Thyroid gland (tissue), 4 donors: ENCODE measurements at regions of chr14 and their contacts with region 1.

Region 1: DNA sequence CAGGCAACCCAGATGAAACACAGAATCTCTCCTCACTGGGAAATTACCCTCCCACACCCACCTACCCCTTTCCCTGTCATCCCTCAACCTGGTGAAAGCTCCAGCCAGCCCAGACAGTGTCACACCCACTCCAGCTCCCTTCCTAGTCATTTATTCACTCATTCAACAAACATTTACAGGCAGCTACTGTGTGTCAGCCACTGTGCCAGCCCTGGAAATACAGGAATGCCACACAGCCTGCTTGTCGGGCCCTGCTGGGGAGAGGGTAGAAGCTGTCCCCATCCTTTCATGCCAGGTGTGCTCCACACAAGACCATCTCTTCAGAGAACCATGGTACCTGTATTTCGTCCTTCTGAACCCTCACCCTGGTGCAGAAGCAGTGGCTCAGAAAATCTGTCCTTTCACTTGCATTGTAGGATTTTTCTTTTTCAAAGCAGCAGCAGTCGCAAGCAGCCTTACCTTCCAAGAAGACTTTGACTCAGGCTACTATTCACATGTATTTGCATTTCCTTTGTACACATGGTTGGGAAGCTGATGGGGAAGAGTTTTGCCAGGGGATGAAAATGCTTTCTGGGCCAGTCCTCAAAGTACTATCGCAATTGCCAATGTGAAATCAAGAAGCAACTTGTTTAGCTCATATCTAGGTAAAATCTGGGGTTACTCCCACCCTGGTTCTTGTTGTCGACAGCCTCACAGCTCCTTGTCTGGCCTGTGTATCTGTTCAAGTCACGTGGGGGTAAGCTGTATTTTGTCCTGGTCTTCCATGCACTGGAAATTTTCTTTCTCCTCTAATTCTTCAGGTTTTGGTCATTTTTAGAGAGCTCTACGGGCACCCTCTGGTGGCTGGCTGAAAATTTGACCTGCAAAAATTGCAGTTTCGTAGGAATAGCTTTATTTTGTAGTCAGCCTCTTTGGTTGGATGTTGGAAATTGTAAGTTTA is 147.4 kb upstream of the EGLN3 start:
- DNase-seq: peak; percentile 36 to 59
- H3K4me3 ChIP-seq: no peak overlapping the region
- H3K27ac ChIP-seq: no peak overlapping the region
- H3K4me1 ChIP-seq: no peaks in the 10 kb centered on the region
- H3K27me3 ChIP-seq: no peaks in the 10 kb centered on the region
- CTCF ChIP-seq: peak; percentile 41 to 83 (median 64)
- POLR2A ChIP-seq: no peak

Region 2: DNA sequence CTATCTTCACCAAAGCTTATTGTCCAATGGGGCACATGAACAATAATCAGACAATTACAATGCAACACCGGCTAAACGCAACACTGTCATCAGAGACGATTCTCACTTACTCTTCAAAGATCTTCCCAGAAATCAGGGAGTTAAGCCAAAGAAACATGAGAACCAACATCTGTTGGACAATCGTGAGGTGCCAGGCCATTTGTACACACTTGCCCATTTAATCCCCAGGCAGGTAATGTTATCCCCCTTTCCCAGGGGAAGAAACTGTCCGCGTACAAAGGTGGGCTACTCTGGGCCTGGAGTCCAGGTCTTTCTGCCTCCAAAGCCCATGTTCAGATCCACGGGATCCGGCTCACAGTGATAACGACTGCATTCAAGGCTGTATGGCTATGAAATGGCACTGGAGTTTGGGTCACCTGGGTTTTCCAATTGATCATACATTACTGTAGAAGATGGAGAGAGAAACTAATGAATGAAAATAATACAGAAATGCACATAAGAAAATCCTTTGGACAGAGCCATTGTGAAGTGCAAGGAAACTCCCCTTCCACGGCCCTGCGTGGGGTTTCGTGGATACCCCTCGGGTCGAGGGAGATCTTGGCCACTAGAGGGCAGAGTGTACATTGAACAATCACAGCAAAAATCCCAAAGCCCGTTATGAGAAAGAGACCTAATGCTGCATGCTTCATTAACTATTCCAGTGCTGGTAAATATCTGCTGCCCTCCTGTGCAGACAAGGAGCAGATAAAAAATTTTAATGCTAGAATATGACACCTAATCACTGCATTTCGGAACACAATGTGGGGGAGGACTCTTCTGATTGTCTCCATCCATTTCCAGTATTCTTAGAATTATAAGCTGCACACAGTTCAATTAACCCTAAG is 258.9 kb before region 1 on chr14:
- intact Hi-C with region 1: loop called (anchors 2 kb)
- DNase-seq: peak; percentile 39 to 59
- H3K4me3 ChIP-seq: no peak overlapping the region
- H3K27ac ChIP-seq: no peak overlapping the region
- H3K4me1 ChIP-seq: no peaks in the 10 kb centered on the region
- H3K27me3 ChIP-seq: no peaks in the 10 kb centered on the region
- CTCF ChIP-seq: peak; percentile 58 to 80 (median 66)
- POLR2A ChIP-seq: no peak

Region 3: DNA sequence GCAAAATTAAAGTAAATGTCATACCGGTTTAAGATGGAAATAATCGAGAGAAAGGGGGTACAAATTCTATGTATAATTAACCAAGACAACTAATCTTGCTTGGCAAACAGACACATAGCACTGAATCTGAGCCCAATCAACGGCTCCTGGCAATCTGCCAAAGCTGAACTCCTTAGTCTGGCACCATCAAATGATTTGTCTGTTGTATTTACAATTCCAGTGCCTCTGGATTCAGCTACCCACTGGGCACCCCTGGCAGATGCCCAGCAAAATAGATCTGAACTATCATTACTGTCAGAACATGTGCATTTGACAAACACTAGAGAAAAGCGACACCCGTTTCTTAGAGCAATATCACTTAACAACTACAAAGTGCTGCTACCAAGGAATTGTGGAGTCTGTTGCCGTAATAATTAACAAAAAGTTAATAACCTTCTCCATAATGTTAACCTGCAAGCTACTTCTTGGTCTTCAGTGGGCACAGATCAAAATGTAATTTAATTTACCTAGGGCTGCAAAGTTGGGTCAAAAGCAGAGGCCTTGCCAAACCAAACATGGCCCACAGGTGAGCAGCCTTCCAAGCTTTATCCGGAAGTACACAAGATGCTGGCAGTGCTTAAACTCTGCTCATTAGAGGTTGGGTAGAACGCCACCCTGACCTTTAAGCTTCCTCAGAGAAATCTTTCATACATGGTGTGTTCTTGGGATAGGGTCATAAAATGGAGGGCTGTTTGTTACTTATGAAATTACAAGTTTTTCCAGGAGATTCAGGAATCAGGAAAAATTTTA is 155.0 kb before region 1 on chr14:
- intact Hi-C with region 1: no loop called
- DNase-seq: peak; percentile 27 to 30
- H3K4me3 ChIP-seq: no peak overlapping the region
- H3K27ac ChIP-seq: no peak overlapping the region
- H3K4me1 ChIP-seq: peaks cover 4 to 6% of the 10 kb centered on the region in 2 donors
- H3K27me3 ChIP-seq: no peaks in the 10 kb centered on the region
- CTCF ChIP-seq: no peak
- POLR2A ChIP-seq: no peak

Region 4: DNA sequence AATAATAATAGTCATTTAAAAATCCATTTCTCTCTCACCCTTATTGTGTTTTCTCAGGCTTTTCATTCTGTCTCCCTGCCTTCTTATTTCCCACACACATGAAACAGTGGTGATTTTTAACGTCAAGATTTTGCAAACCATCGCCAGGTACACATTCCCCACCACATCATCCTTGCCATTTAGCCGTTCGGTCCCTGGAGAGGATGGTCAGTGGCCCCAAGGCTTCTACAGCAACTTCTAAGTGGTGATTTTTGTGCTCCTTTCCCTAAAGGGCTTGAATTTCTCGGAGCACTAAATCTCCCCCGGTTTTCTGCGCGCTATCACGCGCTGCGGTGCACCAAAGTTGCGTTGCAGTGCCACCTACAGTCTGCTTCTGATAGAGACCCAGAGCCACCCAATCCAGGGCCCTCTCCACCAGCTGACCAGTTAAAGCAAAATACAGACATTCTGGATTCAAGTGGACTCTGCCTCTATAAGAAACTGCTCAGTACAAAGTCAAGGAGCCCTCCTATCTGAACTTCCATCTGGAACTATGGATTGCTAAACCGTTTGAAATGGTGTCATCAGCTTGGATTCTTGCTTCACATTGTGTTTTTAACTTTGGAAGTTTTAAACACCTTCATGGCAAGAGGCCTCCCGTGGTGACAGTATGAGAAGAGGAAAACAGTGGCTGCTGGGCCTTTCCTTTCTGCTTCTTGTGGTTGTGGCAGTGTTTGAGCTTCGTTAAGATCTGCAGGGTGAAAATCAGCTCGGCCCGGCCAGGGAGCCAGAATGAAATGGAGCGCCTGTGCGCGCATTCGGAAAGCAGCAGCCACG is 129.7 kb after region 1 on chr14:
- intact Hi-C with region 1: loop called (anchors 5 kb)
- DNase-seq: peak; percentile 57 to 67
- H3K4me3 ChIP-seq: no peak overlapping the region
- H3K27ac ChIP-seq: no peak overlapping the region
- H3K4me1 ChIP-seq: no peaks in the 10 kb centered on the region
- H3K27me3 ChIP-seq: no peaks in the 10 kb centered on the region
- CTCF ChIP-seq: peak in 5 of 6 experiments; percentile 57 to 83 (median 71)
- POLR2A ChIP-seq: no peak